Activated CD4-positive, alpha-beta memory T cell treated with anti-CD3 and anti-CD28 coated beads for 36 hours (primary cell): ENCODE measurements at regions of chr1 and their contacts with region 1.

Region 1: GRCh38 chr1:42013881-42014470 is 95.3 kb upstream of the HIVEP3 start:
- DNase-seq: no peak
- H3K4me3 Mint-ChIP-seq: no peak overlapping the region
- H3K27ac Mint-ChIP-seq: no peak overlapping the region
- H3K4me1 Mint-ChIP-seq: peaks cover 62% of the 10 kb centered on the region
- H3K27me3 Mint-ChIP-seq: no peaks in the 10 kb centered on the region

Region 2: GRCh38 chr1:41360993-41361753 is 652.8 kb before region 1 on chr1 and contains the start of gene FOXO6:
- CTCF ChIA-PET with region 1: no interaction called
- POLR2A ChIA-PET with region 1: no interaction called
- intact Hi-C with region 1: no loop called
- DNase-seq: peak; percentile 95
- H3K4me3 Mint-ChIP-seq: peak within 1 kb of the TSS; percentile 56
- H3K27ac Mint-ChIP-seq: no peak within 1 kb of the TSS
- H3K4me1 Mint-ChIP-seq: peaks cover 4% of the 10 kb centered on the region
- H3K27me3 Mint-ChIP-seq: peaks cover 19% of the 10 kb centered on the region
- total RNA-seq, gene FOXO6: 0.19 TPM

Region 3: GRCh38 chr1:41868599-41868998 is 145.4 kb before region 1 on chr1:
- CTCF ChIA-PET with region 1: no interaction called
- POLR2A ChIA-PET with region 1: no interaction called
- intact Hi-C with region 1: loop called (anchors 10 kb)
- DNase-seq: peak; percentile 60
- H3K4me3 Mint-ChIP-seq: no peak overlapping the region
- H3K27ac Mint-ChIP-seq: no peak overlapping the region
- H3K4me1 Mint-ChIP-seq: peaks cover 28% of the 10 kb centered on the region
- H3K27me3 Mint-ChIP-seq: no peaks in the 10 kb centered on the region

Region 4: DNA sequence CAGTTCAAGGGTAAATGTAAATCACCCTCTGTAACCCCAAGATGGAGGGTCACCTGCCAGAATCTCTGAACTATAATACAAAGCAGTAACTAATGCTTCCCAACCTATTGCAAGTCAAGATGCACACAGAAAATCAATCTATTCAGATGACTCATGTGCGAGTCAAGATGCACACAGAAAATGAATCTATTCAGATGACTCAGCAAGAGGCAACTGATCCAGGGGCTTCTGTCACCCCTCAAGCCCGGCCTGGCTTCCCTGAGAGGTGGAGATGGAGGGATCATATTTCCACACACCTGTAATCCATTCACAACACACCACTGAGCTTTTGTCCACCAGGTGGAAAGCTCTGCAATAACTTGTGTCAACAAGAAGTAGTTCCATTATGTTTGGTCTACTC is 77.9 kb before region 1 on chr1:
- CTCF ChIA-PET with region 1: no interaction called
- POLR2A ChIA-PET with region 1: no interaction called
- intact Hi-C with region 1: loop called (anchors 2 kb)
- DNase-seq: peak; percentile 56
- H3K4me3 Mint-ChIP-seq: no peak overlapping the region
- H3K27ac Mint-ChIP-seq: peak overlapping the region; percentile 55
- H3K4me1 Mint-ChIP-seq: peaks cover 39% of the 10 kb centered on the region
- H3K27me3 Mint-ChIP-seq: no peaks in the 10 kb centered on the region

Region 5: GRCh38 chr1:41955461-41956159 is 58.4 kb before region 1 on chr1:
- CTCF ChIA-PET with region 1: no interaction called
- POLR2A ChIA-PET with region 1: no interaction called
- intact Hi-C with region 1: no loop called
- DNase-seq: peak; percentile 33
- H3K4me3 Mint-ChIP-seq: no peak overlapping the region
- H3K27ac Mint-ChIP-seq: no peak overlapping the region
- H3K4me1 Mint-ChIP-seq: peaks cover 32% of the 10 kb centered on the region
- H3K27me3 Mint-ChIP-seq: no peaks in the 10 kb centered on the region

Region 6: GRCh38 chr1:41975850-41976569 is 38.0 kb before region 1 on chr1:
- CTCF ChIA-PET with region 1: no interaction called
- POLR2A ChIA-PET with region 1: no interaction called
- intact Hi-C with region 1: no loop called
- DNase-seq: no peak
- H3K4me3 Mint-ChIP-seq: no peak overlapping the region
- H3K27ac Mint-ChIP-seq: no peak overlapping the region
- H3K4me1 Mint-ChIP-seq: peaks cover 9% of the 10 kb centered on the region
- H3K27me3 Mint-ChIP-seq: no peaks in the 10 kb centered on the region

Region 7: DNA sequence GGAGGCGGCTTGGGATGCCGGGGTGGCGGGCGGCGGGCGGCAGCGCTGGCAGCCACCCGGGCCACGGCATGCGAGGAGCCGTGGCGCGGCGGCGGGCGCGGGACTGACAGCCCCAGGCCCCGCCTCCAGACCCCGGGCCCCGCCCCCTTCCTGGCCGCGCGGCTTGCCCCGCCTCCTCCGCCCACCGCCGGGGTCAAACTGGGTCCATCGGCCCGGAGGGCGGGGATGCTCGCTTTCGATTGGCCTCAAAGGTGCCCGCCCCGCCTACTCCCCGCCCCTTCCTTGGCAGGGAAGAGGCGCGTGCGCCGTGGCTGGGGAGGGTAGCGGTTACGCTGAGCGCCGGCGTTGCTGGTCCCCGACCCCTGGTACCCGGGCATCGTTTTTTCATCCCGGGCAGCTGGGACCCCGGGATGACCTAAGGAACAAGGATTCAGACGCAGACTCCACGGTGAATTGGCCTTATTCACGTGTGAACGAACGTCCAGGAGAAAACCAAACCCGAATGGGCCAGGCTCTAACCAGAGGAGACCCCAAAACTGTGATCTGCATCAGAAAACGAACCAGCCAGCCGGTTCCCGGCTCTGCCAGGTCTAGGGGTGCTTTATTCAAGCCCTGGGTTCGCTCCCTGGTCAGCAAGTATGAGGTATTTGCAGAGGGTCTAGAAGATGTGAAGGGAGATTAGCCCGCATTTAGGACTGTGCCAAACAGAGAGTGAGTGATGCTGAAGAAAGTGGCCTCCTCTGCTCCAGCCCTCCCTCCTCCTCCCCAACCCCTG is 22.0 kb after region 1 on chr1:
- CTCF ChIA-PET with region 1: no interaction called
- POLR2A ChIA-PET with region 1: no interaction called
- intact Hi-C with region 1: loop called (anchors 2 kb)
- DNase-seq: peak; percentile 99
- H3K4me3 Mint-ChIP-seq: peak overlapping the region; percentile 81
- H3K27ac Mint-ChIP-seq: peak overlapping the region; percentile 46
- H3K4me1 Mint-ChIP-seq: peaks cover 38% of the 10 kb centered on the region
- H3K27me3 Mint-ChIP-seq: no peaks in the 10 kb centered on the region